H1 (cell line): ENCODE measurements at regions of chr6 and their contacts with region 1.

Region 1: DNA sequence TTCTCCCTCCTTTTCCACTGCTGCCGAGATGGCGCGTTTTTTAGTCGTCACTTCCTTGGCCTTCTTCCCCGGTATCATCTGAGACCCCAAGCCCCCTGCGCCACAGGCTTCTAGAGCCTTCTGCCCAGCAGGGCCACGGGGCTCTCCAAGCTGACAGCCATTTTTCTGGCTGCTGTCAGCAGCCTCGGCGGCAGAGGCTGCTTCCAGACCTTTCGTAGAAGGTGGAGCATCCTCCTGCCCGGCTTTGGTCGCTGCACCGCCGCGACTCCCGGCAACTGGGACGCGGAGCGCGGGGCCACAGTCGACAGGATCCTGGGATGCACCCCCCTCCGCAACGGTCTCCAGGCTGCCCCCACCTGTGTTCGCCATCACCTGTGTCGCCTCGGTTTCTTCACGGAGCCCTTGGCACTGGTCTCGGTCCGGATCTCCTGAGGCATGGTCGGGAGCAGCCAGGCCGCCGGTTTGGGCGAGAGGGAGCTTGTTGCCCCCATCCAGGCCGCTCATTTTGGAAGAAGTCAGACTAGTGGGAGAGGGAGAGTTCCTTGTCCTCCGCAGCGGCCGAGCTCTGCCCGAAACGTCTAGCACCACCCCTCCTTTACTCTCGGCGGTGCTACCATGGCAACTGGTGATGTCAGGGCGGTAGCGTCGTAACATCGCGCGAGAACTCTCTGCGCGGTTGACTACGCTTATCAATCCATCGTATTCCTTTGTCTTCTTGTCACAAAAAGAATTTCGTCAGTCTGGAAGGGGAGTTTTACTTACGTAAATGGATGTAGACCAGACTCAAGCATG is at the start of gene TSPYL4:
- DNase-seq: peak; percentile 71 to 92
- H3K4me3 ChIP-seq: peak within 1 kb of the TSS; percentile 81 to 95 (median 88)
- H3K27ac ChIP-seq: peak within 1 kb of the TSS; percentile 74
- H3K4me1 ChIP-seq: peaks cover 7 to 21% (median 18%) of the 10 kb centered on the region in 4 experiments
- H3K27me3 ChIP-seq: no peaks in the 10 kb centered on the region
- CTCF ChIP-seq: no peak
- EP300 ChIP-seq: no peak
- POLR2A ChIP-seq: peak; percentile 59 to 77; a peak in 2 of 3 replicates
- RAD21 ChIP-seq: no peak
- total RNA-seq, gene TSPYL4: 22.6 and 23.3 TPM in 2 replicates

Region 2: GRCh38 chr6:116229287-116229913 is 24.3 kb before region 1 on chr6:
- CTCF ChIA-PET with region 1: interaction called, 8 read pairs
- POLR2A ChIA-PET with region 1: interaction called, 47 read pairs
- DNase-seq: peak; percentile 71 to 98
- H3K4me3 ChIP-seq: peak overlapping the region in 1 of 4 experiments; percentile 40; a peak in 3 of 8 replicates
- H3K27ac ChIP-seq: no peak overlapping the region; the same call in 1 of the 2 replicates
- H3K4me1 ChIP-seq: peaks cover 0 to 5% (median 1%) of the 10 kb centered on the region in 4 experiments; a peak in 3 of 7 replicates
- H3K27me3 ChIP-seq: no peaks in the 10 kb centered on the region
- CTCF ChIP-seq: no peak
- EP300 ChIP-seq: no peak
- POLR2A ChIP-seq: peak in 1 of 2 experiments; percentile 58; a peak in 1 of 3 replicates
- RAD21 ChIP-seq: no peak

Region 3: GRCh38 chr6:116279260-116280063 is 25.8 kb after region 1 on chr6 and contains the start of gene TSPYL1:
- CTCF ChIA-PET with region 1: no interaction called
- POLR2A ChIA-PET with region 1: interaction called, 37 read pairs
- DNase-seq: peak; percentile 84 to 95
- H3K4me3 ChIP-seq: peak within 1 kb of the TSS; percentile 89 to 100 (median 92)
- H3K27ac ChIP-seq: peak within 1 kb of the TSS; percentile 96
- H3K4me1 ChIP-seq: peaks cover 3 to 14% (median 10%) of the 10 kb centered on the region in 4 experiments; a peak in 5 of 7 replicates
- H3K27me3 ChIP-seq: no peaks in the 10 kb centered on the region
- CTCF ChIP-seq: no peak
- EP300 ChIP-seq: no peak
- POLR2A ChIP-seq: peak; percentile 90 to 99
- RAD21 ChIP-seq: 0 out of 4 replicates have a peak, but pooled peaks of 1 of the 2 experiments have one; percentile 5
- total RNA-seq, gene TSPYL1: 77.9 and 79.1 TPM in 2 replicates